ENCODE measurements at regions of chr5 and their contacts with region 1.

Region 1: DNA sequence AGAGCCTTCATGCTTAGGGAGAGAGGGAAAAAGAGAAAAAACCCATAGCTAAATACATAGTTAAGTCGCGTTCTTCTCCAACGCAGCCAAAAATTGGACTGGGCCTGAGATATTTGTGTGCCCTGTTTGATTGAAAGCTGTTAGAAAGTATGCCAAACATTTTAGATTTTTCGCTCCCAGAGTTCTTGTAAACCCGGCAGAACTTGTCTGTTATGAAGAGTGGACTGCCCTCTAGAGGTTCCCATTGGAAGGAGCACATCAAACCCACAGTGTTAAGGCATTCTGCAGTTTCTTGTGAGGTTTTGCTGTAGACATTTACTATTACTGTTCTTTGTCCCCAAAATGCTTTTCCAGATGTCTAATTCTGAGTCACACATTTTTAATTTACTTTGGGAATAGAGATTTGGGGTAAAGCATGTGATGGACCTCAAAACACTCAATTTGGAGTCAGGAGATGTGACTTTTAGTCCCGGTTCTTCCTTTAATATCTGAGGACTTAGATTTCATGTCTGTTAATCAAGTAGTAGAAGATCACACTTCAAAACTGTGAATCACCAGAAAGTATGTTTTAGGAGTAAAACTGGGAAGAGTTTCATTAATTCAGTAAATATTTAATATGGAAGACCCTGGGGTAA is 96.6 kb downstream of the PCSK1 start:
- DNase-seq: peak; percentile 63 to 75
- ATAC-seq: peak; percentile 71
- H3K4me3 ChIP-seq: peak overlapping the region in 2 of 4 donors; percentile 8 to 13
- H3K27ac ChIP-seq: peak overlapping the region; percentile 77 to 89 (median 85)
- H3K4me1 ChIP-seq: peaks cover 32 to 46% of the 10 kb centered on the region in 2 donors
- H3K27me3 ChIP-seq: no peaks in the 10 kb centered on the region
- CTCF ChIP-seq: peak; percentile 48 to 89 (median 79)
- POLR2A ChIP-seq: no peak

Region 2: GRCh38 chr5:95554647-95555548 is 781.6 kb before region 1 on chr5 and contains the starts of genes ARSK and SKIC3:
- in situ Hi-C with region 1: no loop called
- intact Hi-C with region 1: loop called (anchors 5 kb)
- DNase-seq: peak; percentile 91 to 96
- ATAC-seq: peak; percentile 98
- H3K4me3 ChIP-seq: peak within 1 kb of the TSS; percentile 69 to 96 (median 86)
- H3K27ac ChIP-seq: peak within 1 kb of the TSS; percentile 83 to 93 (median 88)
- H3K4me1 ChIP-seq: peaks cover 20 to 27% of the 10 kb centered on the region in 2 donors
- H3K27me3 ChIP-seq: no peaks in the 10 kb centered on the region
- CTCF ChIP-seq: peak in 4 of 5 experiments; percentile 32 to 49 (median 33)
- POLR2A ChIP-seq: peak; percentile 64 to 83
- total RNA-seq, gene ARSK: 2.3 to 4.3 (median 2.8) TPM
- total RNA-seq, gene SKIC3: 40.6 to 54.4 (median 43.4) TPM

Region 3: DNA sequence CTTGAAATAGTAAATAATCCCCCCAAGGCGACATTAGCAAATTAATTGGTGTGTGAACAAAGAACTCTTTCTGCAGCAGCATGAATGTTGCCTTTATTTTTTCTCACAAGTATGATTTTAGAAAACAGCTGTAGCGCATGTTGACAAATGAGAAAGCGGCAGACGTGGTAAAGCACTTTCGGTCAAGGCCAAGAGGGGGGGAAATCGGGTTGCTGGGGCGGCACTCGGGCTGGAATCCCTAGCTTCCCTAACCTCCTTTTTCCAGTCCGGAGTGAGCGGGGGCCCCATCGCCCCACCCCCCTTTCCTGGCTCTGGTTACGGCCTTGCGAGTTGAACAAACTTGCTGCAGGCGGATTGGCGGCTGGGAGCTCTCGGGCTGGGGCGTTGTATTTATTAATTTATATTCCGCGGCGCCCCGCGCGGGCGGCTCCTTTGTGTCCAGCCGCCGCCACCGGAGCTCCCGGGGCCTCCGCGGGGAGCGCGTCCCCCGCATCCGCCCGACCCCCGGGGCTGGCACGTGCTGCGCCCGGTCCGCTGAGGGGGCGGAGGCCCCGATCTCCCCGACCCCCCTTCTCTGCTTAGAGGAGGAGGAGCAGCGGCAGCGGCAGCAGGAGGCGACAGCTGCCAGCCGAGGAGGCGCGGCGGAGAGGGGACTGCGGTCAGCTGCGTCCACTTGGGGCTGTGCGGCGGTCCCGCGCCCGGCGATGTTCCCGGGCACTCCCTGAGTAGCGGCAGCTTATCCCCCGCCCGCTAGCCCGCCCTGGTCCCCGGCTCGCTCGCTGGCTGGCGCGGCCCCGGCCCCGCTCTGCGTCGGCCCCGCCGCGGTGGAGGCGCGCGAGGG is 605.5 kb before region 1 on chr5 and contains the start of gene RHOBTB3:
- in situ Hi-C with region 1: no loop called
- intact Hi-C with region 1: loop called (anchors 5 kb)
- DNase-seq: peak; percentile 89 to 91
- ATAC-seq: peak; percentile 69 to 72
- H3K4me3 ChIP-seq: peak within 1 kb of the TSS; percentile 80 to 87 (median 85)
- H3K27ac ChIP-seq: peak within 1 kb of the TSS; percentile 91 to 96 (median 94)
- H3K4me1 ChIP-seq: peaks cover 39 to 48% of the 10 kb centered on the region in 2 donors
- H3K27me3 ChIP-seq: no peaks in the 10 kb centered on the region
- CTCF ChIP-seq: peak in 1 of 5 experiments; percentile 16
- POLR2A ChIP-seq: peak; percentile 88 to 92
- total RNA-seq, gene RHOBTB3: 40.1 to 134 (median 86.9) TPM

Region 4: DNA sequence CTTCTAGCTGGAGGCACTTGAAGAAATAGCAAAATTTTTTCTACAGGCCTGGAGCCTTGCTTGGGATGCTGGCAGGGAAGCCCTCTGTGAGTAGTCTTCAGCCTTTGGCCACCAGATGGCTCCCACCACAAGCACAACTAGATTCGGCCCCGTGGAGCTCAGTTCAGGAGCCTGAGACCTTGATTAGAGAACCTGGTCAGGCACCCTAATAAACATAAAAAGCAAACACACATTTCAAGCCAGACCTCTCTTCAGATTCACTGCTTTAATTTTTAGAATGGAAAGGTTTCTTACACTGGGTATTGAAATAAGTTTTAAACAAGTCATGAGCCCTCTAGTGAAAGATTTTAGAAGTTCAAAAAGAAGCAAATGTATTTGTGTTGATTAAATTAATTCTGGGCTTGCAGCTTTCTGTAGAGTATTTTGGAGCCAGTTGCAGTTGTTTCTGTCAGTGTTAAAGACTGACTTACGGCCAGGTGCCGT is 555.3 kb before region 1 on chr5:
- in situ Hi-C with region 1: loop called (anchors 10 to 25 kb)
- intact Hi-C with region 1: loop called (anchors 2 kb)
- DNase-seq: peak; percentile 77 to 88
- ATAC-seq: peak; percentile 75 to 87
- H3K4me3 ChIP-seq: no peak overlapping the region
- H3K27ac ChIP-seq: peak overlapping the region; percentile 76 to 85 (median 83)
- H3K4me1 ChIP-seq: peaks cover 18 to 72% of the 10 kb centered on the region in 2 donors
- H3K27me3 ChIP-seq: no peaks in the 10 kb centered on the region
- CTCF ChIP-seq: peak; percentile 87 to 95 (median 89)
- POLR2A ChIP-seq: no peak

Region 5: GRCh38 chr5:96177303-96177869 is 159.1 kb before region 1 on chr5:
- in situ Hi-C with region 1: no loop called
- intact Hi-C with region 1: no loop called
- DNase-seq: no peak
- ATAC-seq: no peak
- H3K4me3 ChIP-seq: no peak overlapping the region
- H3K27ac ChIP-seq: no peak overlapping the region
- H3K4me1 ChIP-seq: no peaks in the 10 kb centered on the region
- H3K27me3 ChIP-seq: no peaks in the 10 kb centered on the region
- CTCF ChIP-seq: no peak
- POLR2A ChIP-seq: no peak

Region 6: DNA sequence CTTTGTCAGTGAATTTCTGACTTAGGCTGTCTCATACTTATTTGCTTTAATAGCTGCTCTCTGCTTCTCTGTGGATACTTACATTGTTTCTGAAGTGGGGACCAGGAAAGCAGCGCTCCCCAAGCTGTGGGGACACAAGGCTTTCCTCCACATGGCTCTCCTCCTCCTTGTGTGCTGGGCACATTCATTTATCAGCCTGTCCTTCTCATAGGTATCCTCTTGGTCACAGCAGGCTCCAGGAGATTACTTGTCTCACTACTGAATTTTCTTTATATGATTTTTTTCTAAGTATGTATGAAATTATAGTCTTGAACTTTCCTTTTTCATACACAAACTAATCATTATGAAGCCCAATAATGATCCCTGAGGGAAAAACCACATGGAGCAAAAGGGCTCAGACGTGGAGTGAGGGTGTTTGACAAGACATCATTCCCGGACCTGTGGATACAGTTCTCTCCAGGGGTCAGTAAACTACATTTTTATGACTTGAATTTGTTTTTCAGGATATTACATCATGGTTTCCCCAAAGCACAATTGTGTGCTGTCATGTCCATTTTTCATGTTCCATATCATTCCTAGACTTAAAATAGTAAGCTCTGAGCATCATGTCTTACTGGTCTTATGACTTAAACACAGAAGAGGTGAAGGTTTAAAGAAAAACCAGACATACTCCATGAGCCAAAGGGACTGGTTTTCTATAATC is 138.0 kb before region 1 on chr5:
- in situ Hi-C with region 1: no loop called
- intact Hi-C with region 1: no loop called
- DNase-seq: no peak
- ATAC-seq: no peak
- H3K4me3 ChIP-seq: no peak overlapping the region
- H3K27ac ChIP-seq: no peak overlapping the region
- H3K4me1 ChIP-seq: no peaks in the 10 kb centered on the region
- H3K27me3 ChIP-seq: no peaks in the 10 kb centered on the region
- CTCF ChIP-seq: no peak
- POLR2A ChIP-seq: no peak

Region 7: GRCh38 chr5:96297290-96297689 is 39.2 kb before region 1 on chr5:
- in situ Hi-C with region 1: no loop called
- intact Hi-C with region 1: no loop called
- DNase-seq: no peak
- ATAC-seq: no peak
- H3K4me3 ChIP-seq: no peak overlapping the region
- H3K27ac ChIP-seq: no peak overlapping the region
- H3K4me1 ChIP-seq: peaks cover 0 to 8% of the 10 kb centered on the region in 2 donors
- H3K27me3 ChIP-seq: no peaks in the 10 kb centered on the region
- CTCF ChIP-seq: no peak
- POLR2A ChIP-seq: no peak

Region 8: DNA sequence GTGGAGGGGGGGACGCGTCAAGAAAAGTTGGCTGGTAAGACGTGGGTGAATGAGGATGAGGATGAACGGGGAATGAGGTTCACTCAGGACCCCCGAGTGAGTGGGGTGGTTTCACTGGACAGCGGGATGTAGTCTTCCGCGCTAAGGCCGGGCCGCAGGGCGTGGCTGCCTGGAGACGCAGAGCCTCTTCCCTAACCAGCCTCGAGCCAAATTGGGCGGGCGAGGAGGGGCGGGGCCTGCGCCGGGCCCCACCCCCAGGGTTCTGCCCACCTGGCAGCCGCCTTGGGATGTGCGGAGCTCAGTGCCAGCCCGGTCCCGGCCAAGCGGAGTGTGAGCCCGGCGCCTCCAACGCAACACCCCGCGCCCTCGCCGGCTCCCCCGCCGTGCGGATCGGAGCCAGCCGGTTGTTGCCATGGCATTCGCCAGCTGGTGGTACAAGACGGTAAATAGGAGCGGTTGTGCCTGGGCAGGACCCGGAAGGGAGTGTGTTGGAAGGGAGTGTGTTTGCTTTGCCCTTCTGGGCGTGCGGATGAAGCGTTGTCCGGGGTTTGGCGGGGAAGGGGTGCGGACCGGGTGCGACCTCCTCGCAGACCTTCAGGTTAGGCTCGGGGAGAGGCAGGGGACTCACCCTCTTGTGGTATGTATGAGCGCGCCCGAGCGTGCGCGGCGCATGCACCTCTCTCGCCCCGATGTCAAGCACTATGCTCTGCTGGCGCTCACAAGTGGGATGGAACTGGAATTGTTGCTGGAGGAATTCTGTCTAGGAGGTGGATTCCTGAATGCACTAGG is 326.5 kb after region 1 on chr5:
- in situ Hi-C with region 1: no loop called
- intact Hi-C with region 1: loop called (anchors 1 kb)
- DNase-seq: peak; percentile 88 to 94
- ATAC-seq: peak; percentile 80 to 84
- H3K4me3 ChIP-seq: peak overlapping the region; percentile 72 to 98 (median 88)
- H3K27ac ChIP-seq: peak overlapping the region; percentile 94 to 98 (median 96)
- H3K4me1 ChIP-seq: peaks cover 25 to 28% of the 10 kb centered on the region in 2 donors
- H3K27me3 ChIP-seq: no peaks in the 10 kb centered on the region
- CTCF ChIP-seq: peak in 2 of 5 experiments; percentile 4 to 19
- POLR2A ChIP-seq: peak; percentile 89

Measured in gastrocnemius medialis (tissue), 4 donors.